Activated naive CD4-positive, alpha-beta T cell treated with anti-CD3 and anti-CD28 coated beads for 36 hours (primary cell): ENCODE measurements at regions of chr1 and their contacts with region 1.

Region 1: DNA sequence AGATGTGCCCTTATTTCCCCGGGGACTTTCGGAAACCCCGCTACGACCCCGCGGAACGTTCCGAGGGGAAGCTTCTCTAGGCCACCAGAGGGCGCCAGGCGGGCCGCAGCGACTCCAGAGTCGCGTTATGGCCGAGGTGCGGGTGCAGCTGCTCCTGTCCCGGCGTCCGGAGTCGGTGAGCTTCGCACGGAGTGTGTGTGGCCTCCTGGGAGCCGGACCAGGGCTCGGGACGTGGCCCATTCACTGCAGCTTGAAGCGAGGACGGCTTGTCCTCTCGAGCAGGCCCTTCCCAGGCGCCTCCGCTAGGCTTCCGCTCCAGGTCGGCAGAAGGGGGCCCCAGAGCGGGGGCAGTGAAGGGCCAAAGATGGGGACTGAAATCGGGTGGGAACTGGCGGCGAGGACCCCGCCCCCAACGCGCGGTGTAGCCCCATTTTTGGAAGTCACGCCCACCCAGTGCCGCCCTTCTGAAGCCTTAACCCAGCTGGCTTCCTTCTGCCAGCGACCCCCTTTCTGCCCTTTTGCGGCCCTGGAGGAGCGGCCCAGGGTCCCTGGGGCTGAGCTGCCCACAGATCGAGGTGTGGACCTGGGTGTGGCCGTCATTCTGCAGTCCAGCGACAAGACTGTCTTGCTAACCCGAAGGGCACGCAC is at the start of gene NUDT17:
- DNase-seq: peak; percentile 80
- H3K4me3 Mint-ChIP-seq: no peak within 1 kb of the TSS
- H3K27ac Mint-ChIP-seq: peak within 1 kb of the TSS; percentile 46
- H3K4me1 Mint-ChIP-seq: peaks cover 15% of the 10 kb centered on the region
- H3K27me3 Mint-ChIP-seq: no peaks in the 10 kb centered on the region
- total RNA-seq, gene NUDT17: 3.2 to 3.4 TPM

Region 2: DNA sequence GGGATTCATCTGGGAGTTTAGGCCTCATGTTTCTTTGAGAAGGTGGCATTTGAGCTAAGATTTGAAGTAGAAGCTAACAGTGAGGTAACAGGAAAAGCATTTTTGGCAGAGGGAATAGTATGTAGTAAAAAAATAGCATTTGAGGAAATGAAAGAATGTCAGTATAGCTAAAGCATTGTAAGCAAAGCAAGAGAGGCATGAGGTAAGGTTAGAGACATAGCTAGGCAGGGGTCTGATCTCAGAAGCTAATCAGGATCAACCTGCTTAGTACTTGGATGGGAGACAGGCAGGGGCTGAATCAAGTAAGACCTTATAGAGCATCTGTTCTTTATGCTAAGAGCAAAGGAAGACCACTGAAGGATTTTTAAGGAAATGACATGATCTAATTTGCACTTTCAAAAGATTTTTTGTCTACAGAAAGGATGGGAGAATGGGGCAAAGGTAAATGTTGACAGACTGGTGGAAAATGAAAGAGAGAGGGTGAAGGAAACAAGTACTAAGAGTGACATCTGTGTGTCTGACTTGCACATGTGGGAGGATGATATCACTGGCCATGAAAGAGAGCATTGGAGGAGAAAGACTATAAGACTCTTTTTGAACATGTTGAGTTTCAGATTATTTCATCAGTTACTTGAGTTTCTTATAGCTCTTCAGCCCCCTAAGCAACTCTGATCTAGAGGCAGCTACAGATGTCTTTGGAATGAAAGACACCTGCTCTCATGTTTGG is 17.5 kb before region 1 on chr1:
- CTCF ChIA-PET with region 1: interaction called, 141 read pairs
- intact Hi-C with region 1: no loop called
- DNase-seq: peak; percentile 56
- H3K4me3 Mint-ChIP-seq: peak overlapping the region; percentile 7
- H3K27ac Mint-ChIP-seq: peak overlapping the region; percentile 95
- H3K4me1 Mint-ChIP-seq: peaks cover 44% of the 10 kb centered on the region
- H3K27me3 Mint-ChIP-seq: no peaks in the 10 kb centered on the region

Region 3: GRCh38 chr1:145871994-145872924 is 26.6 kb after region 1 on chr1:
- CTCF ChIA-PET with region 1: interaction called, 37 read pairs
- intact Hi-C with region 1: no loop called
- DNase-seq: peak; percentile 47
- H3K4me3 Mint-ChIP-seq: peak overlapping the region; percentile 63
- H3K27ac Mint-ChIP-seq: no peak overlapping the region
- H3K4me1 Mint-ChIP-seq: peaks cover 14% of the 10 kb centered on the region
- H3K27me3 Mint-ChIP-seq: peaks cover 4% of the 10 kb centered on the region

Region 4: GRCh38 chr1:145885738-145886287 is 40.2 kb after region 1 on chr1 and contains the start of gene ANKRD35:
- CTCF ChIA-PET with region 1: interaction called, 38 read pairs
- intact Hi-C with region 1: loop called (anchors 1 kb)
- DNase-seq: peak; percentile 89
- H3K4me3 Mint-ChIP-seq: peak within 1 kb of the TSS; percentile 79
- H3K27ac Mint-ChIP-seq: no peak within 1 kb of the TSS
- H3K4me1 Mint-ChIP-seq: peaks cover 14% of the 10 kb centered on the region
- H3K27me3 Mint-ChIP-seq: peaks cover 16% of the 10 kb centered on the region
- total RNA-seq, gene ANKRD35: 0.19 to 0.20 TPM

Region 5: DNA sequence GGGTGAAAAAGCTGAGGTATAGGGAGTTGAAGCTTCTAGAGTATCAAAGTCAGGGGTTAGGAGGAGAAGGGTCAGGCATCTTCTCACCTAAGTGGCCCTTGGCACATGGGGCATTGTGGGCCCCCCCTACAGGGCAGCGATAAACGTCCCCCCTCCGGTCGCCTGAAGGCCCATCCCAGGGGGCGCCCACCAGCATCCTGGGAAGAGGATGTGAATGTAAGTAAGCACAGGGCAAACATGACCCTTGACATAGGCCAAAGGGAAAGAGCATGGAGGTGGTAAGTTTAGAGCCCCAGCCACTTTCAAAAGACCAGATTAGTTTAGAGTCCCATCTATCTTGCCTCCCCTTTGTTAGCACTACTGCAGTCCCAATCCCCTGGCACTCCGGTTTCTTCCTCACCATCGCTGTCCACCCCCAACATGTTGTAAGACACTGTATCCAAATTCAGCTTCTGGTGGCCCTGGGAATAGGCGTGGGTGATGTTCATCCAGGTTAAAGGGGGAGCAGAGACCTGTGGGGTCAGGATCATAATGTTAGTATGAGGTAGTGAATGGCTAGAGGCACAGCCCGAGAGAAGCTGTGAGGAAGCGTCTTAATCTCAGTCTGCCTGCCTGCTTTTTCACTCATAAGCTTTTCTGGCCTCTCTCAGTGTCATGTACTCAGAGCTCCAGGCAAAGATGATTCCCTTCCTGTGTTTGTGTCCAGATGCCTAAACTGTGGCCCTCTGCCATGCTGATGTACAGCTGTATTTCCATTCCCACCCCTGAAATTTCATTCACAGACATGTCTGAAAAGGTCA is 61.5 kb after region 1 on chr1:
- CTCF ChIA-PET with region 1: interaction called, 76 read pairs
- intact Hi-C with region 1: loop called (anchors 1 kb)
- DNase-seq: no peak
- H3K4me3 Mint-ChIP-seq: no peak overlapping the region
- H3K27ac Mint-ChIP-seq: no peak overlapping the region
- H3K4me1 Mint-ChIP-seq: peaks cover 5% of the 10 kb centered on the region
- H3K27me3 Mint-ChIP-seq: no peaks in the 10 kb centered on the region

Region 6: GRCh38 chr1:145978854-145979759 is 133.5 kb after region 1 on chr1:
- CTCF ChIA-PET with region 1: interaction called, 9 read pairs
- intact Hi-C with region 1: loop called (anchors 1 kb)
- DNase-seq: peak; percentile 93
- H3K4me3 Mint-ChIP-seq: no peak overlapping the region
- H3K27ac Mint-ChIP-seq: no peak overlapping the region
- H3K4me1 Mint-ChIP-seq: peaks cover 5% of the 10 kb centered on the region
- H3K27me3 Mint-ChIP-seq: no peaks in the 10 kb centered on the region

Region 7: DNA sequence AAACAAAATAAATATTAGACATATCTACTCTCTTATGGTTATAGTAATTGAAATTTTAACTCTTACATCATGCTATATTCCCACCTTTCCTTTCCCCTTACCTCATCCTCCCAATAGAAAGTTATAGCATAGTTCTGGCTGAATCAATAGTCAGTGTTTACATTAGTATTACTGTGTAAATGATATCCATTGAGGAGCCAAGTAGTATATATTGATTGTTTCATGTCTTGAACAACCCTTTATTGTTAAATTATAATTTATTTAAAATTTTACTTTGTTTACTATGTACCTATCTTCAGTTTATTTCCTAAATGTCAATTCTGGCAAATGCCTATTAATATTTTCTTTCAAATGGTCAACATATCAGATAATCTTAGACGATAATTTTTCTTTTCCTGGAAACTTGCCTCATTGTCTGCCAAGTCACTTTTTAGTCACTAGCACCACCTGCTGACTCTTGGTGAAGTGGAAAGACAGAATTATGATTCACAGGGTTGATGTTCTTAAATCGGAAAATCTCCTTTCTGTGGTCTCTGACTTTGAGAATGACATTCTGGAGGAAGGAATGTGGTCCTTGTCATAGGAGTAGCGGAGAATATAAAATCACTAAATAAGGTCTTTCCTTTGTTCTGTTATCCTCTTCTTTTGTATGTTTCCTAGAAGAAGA is 167.2 kb after region 1 on chr1:
- CTCF ChIA-PET with region 1: interaction called, 23 read pairs
- intact Hi-C with region 1: loop called (anchors 1 kb)
- DNase-seq: peak; percentile 84
- H3K4me3 Mint-ChIP-seq: no peak overlapping the region
- H3K27ac Mint-ChIP-seq: no peak overlapping the region
- H3K4me1 Mint-ChIP-seq: peaks cover 5% of the 10 kb centered on the region
- H3K27me3 Mint-ChIP-seq: peaks cover 7% of the 10 kb centered on the region

Region 8: DNA sequence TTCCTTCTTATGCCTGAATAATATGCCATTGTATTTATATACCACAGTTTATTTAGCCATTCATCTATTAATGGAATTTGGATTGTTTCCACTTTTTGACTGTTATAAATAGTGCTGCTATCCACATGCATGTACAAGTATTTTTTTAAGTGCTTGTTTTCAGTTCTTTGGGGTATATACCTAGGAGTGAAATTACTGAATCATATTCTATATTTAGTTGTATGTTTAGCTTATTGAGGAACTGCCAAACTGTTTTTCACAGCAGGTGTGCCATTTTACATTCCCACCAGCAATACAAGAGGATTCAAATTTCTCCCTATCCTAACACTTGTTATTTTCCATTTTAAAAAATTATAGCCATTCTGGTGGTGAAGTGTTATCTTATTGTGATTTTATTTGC is 183.5 kb after region 1 on chr1:
- CTCF ChIA-PET with region 1: no interaction called
- intact Hi-C with region 1: no loop called
- DNase-seq: no peak
- H3K4me3 Mint-ChIP-seq: no peak overlapping the region
- H3K27ac Mint-ChIP-seq: no peak overlapping the region
- H3K4me1 Mint-ChIP-seq: peaks cover 4% of the 10 kb centered on the region
- H3K27me3 Mint-ChIP-seq: peaks cover 4% of the 10 kb centered on the region